ENCODE measurements at regions of chr9 and their contacts with region 1.

Region 1: DNA sequence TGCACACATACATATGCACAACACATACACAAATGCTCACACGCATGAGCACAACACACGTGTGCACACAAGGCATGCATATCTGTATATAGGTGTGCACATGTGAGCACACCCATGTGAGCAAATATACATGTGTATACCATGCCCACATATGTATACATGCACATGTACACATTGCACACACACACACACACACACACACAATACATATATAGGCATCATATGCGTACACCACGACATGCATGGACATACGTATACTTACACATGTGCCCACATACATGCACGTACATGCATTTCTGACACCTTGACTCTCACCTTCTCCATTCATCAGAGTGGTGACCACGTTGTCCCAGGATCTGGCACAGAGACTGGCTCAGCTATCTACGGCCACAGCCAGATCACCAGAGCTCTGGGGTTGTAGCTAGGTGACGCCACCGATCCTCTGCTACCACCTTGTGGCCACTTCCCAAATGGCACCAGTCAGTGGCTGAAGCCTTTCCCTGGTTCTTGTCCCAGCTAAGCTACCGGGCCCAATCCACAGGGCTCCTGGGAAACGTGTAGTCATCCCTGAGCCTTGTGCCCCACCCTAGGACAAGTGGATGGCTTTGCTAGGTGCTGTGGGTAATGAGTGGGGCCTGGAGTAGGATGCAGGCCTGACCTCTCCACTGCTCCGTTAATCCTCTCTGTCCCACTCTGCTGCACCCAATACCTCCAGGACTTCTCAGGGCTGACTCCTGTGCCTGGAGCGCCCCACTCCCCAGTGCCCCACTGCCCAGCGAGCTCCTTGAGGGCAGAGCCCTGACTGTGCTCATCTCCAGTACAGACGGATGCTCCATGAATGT is 194.4 kb downstream of the RGS3 start:
- DNase-seq: peak; percentile 48 to 86
- H3K4me3 ChIP-seq: no peak overlapping the region
- H3K27ac ChIP-seq: no peak overlapping the region
- H3K4me1 ChIP-seq: no peaks in the 10 kb centered on the region
- H3K27me3 ChIP-seq: peaks cover 41% of the 10 kb centered on the region
- CTCF ChIP-seq: peak; percentile 92

Region 2: GRCh38 chr9:112921549-112921948 is 736.4 kb before region 1 on chr9:
- CTCF ChIA-PET with region 1: no interaction called
- POLR2A ChIA-PET with region 1: no interaction called
- intact Hi-C with region 1: loop called (anchors 5 kb)
- DNase-seq: peak in 1 of 2 experiments; percentile 50
- H3K4me3 ChIP-seq: no peak overlapping the region
- H3K27ac ChIP-seq: no peak overlapping the region
- H3K4me1 ChIP-seq: peaks cover 28% of the 10 kb centered on the region
- H3K27me3 ChIP-seq: no peaks in the 10 kb centered on the region
- CTCF ChIP-seq: peak; percentile 57; the same call in 1 of the 2 replicates

Region 3: DNA sequence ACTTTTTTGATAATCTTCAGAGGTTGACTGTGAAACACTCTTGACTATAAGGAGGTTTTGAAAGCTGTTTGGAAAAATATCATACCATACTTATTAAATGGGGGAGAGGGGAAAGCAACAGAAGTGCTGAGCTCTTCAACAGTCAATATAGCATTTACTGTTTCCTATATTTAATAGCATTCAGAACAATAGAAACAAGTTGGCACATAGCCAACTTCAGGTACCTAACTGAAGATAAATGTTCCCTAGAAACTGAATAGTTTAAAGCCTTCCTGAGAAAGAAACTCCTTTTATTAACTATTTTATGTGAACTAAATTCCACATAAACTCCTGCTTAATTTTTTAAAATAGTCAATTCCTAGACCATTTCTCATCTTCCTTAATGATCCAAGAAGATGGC is 410.3 kb before region 1 on chr9:
- CTCF ChIA-PET with region 1: no interaction called
- POLR2A ChIA-PET with region 1: no interaction called
- intact Hi-C with region 1: no loop called
- DNase-seq: no peak
- H3K4me3 ChIP-seq: no peak overlapping the region
- H3K27ac ChIP-seq: no peak overlapping the region
- H3K4me1 ChIP-seq: no peaks in the 10 kb centered on the region
- H3K27me3 ChIP-seq: no peaks in the 10 kb centered on the region
- CTCF ChIP-seq: no peak

Region 4: DNA sequence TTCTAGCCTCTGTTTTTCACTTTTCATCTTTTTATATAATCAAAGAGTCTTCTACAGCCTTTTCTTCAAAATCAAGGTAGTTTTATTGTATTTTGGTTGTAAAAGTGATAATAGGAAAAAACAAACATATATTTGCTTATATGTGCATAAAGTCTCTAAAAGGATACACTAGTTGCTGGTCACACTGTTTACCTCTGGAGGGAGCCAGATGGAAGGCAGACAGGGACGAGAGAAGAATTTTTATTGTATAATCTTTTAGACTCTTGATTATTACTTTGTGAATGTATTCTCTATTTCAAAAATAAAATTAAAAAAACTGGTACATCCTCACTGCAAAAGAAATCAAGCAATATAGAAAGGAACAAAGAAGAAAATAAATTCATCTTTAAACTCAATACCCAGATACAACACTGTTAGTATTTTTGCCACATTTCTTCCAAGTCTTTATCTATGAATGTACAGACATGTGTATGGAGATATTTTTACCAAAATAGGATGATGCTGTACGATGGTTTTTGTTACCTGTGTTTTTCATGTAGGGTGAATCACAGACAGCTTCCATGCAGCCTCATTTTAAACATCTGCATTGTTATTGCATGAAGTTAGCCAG is 348.6 kb before region 1 on chr9:
- CTCF ChIA-PET with region 1: no interaction called
- POLR2A ChIA-PET with region 1: no interaction called
- intact Hi-C with region 1: loop called (anchors 1 kb)
- DNase-seq: peak; percentile 17 to 44
- H3K4me3 ChIP-seq: no peak overlapping the region
- H3K27ac ChIP-seq: no peak overlapping the region
- H3K4me1 ChIP-seq: no peaks in the 10 kb centered on the region; the same call in 1 of the 2 replicates
- H3K27me3 ChIP-seq: no peaks in the 10 kb centered on the region
- CTCF ChIP-seq: peak; percentile 82

Region 5: GRCh38 chr9:113410207-113410864 is 247.6 kb before region 1 on chr9 and contains the starts of genes C9orf43 and POLE3:
- CTCF ChIA-PET with region 1: interaction called, 3 read pairs
- POLR2A ChIA-PET with region 1: no interaction called
- intact Hi-C with region 1: loop called (anchors 1 kb)
- DNase-seq: peak; percentile 87 to 95
- H3K4me3 ChIP-seq: peak within 1 kb of the TSS; percentile 76
- H3K27ac ChIP-seq: peak within 1 kb of the TSS; percentile 89
- H3K4me1 ChIP-seq: peaks cover 18% of the 10 kb centered on the region
- H3K27me3 ChIP-seq: no peaks in the 10 kb centered on the region
- CTCF ChIP-seq: no peak
- total RNA-seq, gene C9orf43: 1.5 and 2.5 TPM in 2 replicates
- total RNA-seq, gene POLE3: 53.8 and 64.5 TPM in 2 replicates

Region 6: DNA sequence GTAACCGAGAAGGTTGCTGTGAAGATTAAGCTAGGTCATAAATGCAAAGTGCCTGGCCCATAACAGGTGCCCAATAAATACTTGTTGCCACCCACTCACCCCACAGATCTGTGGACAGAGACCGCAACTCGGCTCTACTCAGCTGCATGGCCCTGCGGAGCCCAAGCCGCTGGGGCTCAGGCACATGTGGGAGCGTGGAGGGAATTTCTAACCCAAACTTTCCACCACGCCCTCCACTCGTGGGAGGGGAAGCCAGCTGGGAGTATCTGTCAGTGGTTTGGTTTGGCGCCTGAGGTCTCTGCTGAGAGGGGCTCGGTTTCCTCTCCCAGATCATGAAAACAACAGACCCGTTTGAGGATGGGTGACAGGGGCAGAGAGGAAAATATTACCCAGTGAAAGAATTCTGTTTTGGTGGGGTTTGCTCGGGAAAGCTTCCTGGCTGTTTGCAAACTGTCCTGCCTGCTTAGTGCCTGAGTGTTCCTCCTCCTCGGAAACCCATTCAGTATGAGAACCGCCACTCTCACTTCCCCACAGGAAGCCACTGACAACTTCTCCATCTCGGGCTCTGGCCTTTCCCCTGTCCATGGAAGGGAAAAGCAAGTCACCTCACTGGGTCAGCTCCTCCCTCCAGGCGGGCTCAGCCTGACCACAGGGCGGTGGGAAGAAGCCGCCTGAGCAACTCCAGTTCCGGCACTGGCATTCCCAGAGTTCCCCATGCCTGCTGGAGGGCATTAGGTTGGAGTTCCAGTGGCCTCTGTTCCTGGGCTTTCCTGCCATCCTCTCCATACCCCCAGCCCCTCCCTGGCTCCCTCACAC is 134.3 kb before region 1 on chr9:
- CTCF ChIA-PET with region 1: no interaction called
- POLR2A ChIA-PET with region 1: no interaction called
- intact Hi-C with region 1: loop called (anchors 10 kb)
- DNase-seq: no peak
- H3K4me3 ChIP-seq: no peak overlapping the region
- H3K27ac ChIP-seq: no peak overlapping the region
- H3K4me1 ChIP-seq: no peaks in the 10 kb centered on the region
- H3K27me3 ChIP-seq: no peaks in the 10 kb centered on the region
- CTCF ChIP-seq: no peak

Region 7: DNA sequence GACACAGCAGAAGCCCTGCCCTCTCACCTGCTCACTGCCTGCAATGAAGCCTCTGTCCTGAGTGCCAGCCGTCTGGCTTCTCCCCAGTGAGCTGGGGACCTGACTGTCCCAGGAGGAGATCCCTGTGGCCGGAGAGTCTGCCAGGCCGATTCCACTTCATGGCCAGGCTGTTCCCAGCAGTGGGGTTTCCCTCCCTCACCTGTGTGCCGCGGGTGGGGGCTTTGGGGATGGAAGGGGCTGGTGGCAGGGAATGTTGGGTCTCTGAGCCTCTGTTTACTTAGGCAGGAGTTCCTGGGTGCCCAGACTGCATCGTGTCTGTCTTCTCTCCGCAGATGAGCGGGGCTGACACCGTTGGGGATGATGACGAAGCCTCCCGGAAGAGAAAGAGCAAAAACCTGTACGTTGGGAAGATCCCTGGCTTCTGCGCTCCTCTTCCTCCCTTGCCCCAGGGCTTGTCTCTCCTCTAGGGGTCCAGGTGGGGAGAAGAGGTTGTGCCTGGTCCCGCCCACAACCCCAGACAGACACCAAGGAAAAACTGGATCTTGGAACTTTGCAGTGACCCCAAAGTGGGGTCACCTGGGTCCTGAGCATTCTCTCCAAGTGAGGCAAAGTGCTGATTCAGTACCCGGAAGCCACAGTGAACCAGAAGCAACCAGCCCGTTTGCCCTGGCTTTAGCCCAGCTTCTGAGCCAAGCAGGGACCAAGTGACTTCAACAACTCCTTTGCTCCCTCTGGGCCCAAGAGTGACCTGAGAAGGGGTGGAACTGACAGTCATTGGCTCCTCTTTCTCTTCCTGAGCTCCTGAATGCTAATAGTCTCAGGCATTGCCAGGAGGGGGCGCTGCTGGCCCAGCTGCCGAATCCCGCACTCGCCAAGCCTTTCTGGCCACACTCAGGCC is 66.7 kb before region 1 on chr9:
- CTCF ChIA-PET with region 1: interaction called, 59 read pairs
- POLR2A ChIA-PET with region 1: interaction called, 3 read pairs
- intact Hi-C with region 1: loop called (anchors 1 kb)
- DNase-seq: peak in 1 of 2 experiments; percentile 79
- H3K4me3 ChIP-seq: no peak overlapping the region
- H3K27ac ChIP-seq: no peak overlapping the region
- H3K4me1 ChIP-seq: no peaks in the 10 kb centered on the region
- H3K27me3 ChIP-seq: no peaks in the 10 kb centered on the region
- CTCF ChIP-seq: peak; percentile 95

Region 8: DNA sequence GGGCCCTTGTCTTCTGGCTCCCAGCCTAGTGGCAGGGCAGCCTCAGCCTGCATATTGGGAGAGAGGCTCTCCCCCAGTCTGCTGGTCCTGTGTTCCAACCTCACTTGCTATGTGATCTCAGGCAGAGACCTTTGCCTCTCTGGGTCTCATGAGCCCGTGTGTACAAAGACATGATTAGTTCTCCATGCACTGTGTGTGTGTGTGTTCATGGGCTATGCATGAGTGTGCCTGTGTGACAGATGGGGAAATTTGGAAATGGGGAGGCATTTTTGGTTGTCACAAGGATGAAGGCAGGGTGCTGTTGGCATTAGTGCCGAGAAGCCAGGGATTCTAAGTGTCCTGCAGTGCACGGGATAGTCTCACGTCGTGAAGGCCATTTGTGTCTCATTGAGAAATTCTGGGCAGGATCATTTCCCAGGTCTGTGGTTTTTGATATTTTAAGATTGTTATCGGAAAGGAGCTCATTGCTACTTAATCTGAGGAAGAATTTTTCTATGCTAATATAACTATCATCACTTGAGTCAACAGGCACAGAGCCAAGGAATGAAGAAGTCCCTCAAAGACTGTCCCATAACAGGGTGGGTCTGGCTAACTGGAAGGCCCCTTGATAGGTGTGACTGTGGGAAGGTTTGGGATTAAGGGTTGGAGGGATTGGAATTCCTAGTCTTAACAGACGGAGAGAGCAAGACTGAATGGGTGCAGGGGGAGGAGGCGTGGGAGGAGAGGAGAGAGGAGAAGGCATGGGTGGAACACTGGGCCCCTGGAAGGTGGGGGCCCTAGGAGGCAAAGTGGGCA is 25.9 kb before region 1 on chr9:
- CTCF ChIA-PET with region 1: no interaction called
- POLR2A ChIA-PET with region 1: no interaction called
- intact Hi-C with region 1: no loop called
- DNase-seq: no peak
- H3K4me3 ChIP-seq: no peak overlapping the region
- H3K27ac ChIP-seq: no peak overlapping the region
- H3K4me1 ChIP-seq: no peaks in the 10 kb centered on the region
- H3K27me3 ChIP-seq: no peaks in the 10 kb centered on the region
- CTCF ChIP-seq: no peak